Activated T-helper 1 cell treated with anti-CD3 and anti-CD28 coated beads, Interleukin-12 subunit alpha, Interleukin-12 subunit beta, Interleukin-2, Interleukin-4 antibody, amounts not matched to agents 30 ng/mL and 10 ng/mL and 1 ng/mL, durations not matched to agents 14 hours and 24 hours and 36 hours (primary cell): ENCODE measurements at regions of chr5 and their contacts with region 1.

Region 1: DNA sequence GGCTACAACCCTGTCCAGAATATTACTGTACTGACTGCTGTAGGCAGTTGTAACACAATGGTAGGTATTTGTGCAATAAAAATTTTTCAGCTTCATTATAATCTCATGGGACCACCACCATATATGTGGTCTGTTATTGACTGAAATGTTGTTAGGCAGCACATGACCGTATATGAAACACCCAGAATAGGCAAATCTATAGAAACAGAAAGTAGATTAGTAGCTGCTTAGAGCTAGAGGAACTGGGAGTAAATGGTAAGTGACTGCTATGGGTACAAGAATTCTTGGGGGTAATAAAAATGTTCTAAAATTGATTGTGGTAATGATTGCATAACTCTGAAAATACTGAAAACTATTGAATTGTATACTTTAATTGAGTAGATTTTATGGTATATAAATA is 185.7 kb downstream of the ESM1 start:
- DNase-seq: no peak
- H3K4me3 Mint-ChIP-seq: no peak overlapping the region
- H3K27ac Mint-ChIP-seq: no peak overlapping the region
- H3K4me1 Mint-ChIP-seq: peaks cover 54% of the 10 kb centered on the region
- H3K27me3 Mint-ChIP-seq: no peaks in the 10 kb centered on the region

Region 2: DNA sequence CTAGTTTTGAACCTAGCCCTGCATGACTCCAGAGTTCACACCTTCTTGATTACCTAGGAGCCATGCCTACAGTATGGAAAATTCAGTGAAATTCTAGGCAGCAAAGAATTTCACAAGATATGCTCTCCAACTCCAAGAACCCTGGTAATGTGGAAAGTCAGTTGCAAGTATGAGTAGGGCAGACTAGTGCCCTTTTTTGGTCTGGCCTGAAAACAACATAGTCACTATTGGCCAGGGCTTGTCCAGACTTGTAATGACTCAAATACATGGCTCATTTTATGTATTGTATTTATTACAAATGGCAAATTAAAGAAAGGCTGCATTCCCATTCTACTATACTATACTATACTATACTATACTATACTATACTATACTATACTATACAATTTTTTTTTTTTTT is 25.4 kb after region 1 on chr5:
- intact Hi-C with region 1: no loop called
- DNase-seq: no peak
- H3K4me3 Mint-ChIP-seq: no peak overlapping the region
- H3K27ac Mint-ChIP-seq: no peak overlapping the region
- H3K4me1 Mint-ChIP-seq: no peaks in the 10 kb centered on the region
- H3K27me3 Mint-ChIP-seq: peaks cover 31% of the 10 kb centered on the region

Region 3: GRCh38 chr5:54838843-54839242 is 39.2 kb after region 1 on chr5:
- intact Hi-C with region 1: loop called (anchors 1 kb)
- DNase-seq: no peak
- H3K4me3 Mint-ChIP-seq: no peak overlapping the region
- H3K27ac Mint-ChIP-seq: no peak overlapping the region
- H3K4me1 Mint-ChIP-seq: peaks cover 29% of the 10 kb centered on the region
- H3K27me3 Mint-ChIP-seq: peaks cover 7% of the 10 kb centered on the region